ENCODE measurements at regions of chr3 and their contacts with region 1.

Region 1: DNA sequence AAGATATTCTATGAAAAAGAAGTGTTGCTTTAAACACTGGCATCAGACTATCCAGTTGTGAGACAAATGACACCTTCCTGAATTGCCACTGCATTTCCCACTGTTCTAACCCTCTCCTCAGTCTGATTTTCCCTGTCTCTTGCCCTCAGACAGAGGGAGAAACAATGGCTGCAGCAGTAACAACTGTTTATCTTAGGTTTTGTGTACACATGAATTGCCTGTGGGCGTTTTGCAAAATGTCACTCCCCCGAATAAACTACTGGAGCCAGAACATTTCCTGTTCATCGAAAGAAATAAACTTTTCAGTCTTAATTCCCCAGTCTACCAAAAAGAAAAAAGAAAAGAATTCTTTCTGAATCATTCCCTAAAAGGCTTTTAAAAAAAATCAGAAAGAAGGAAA is 155.1 kb downstream of the MAGI1 start:
- DNase-seq: no peak
- H3K4me3 Mint-ChIP-seq: peak overlapping the region; percentile 55
- H3K27ac Mint-ChIP-seq: peak overlapping the region; percentile 62
- H3K4me1 Mint-ChIP-seq: peaks cover 23% of the 10 kb centered on the region
- H3K27me3 Mint-ChIP-seq: no peaks in the 10 kb centered on the region
- CTCF ChIP-seq: no peak

Region 2: DNA sequence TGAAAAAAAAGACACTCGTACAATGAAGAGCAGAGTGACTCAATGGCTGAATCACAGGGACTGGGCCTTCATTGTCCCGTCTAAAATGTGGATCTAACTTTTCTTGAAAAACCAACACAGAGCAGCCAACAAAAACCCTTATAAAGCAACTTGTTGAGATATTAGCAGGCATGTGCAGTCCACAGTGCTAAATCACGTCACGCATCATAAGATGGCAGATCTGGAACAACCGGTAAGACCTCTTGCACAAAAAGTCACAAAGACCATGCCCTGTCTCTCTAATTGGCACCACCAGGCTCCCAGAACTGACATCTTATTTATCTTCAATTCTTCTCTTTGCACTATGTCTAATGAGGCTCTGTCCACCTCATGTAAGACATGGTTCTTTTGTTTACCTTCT is 21.9 kb before region 1 on chr3:
- CTCF ChIA-PET with region 1: no interaction called
- intact Hi-C with region 1: loop called (anchors 2 kb)
- DNase-seq: no peak
- H3K4me3 Mint-ChIP-seq: no peak overlapping the region
- H3K27ac Mint-ChIP-seq: no peak overlapping the region
- H3K4me1 Mint-ChIP-seq: peaks cover 32% of the 10 kb centered on the region
- H3K27me3 Mint-ChIP-seq: no peaks in the 10 kb centered on the region
- CTCF ChIP-seq: no peak

Region 3: DNA sequence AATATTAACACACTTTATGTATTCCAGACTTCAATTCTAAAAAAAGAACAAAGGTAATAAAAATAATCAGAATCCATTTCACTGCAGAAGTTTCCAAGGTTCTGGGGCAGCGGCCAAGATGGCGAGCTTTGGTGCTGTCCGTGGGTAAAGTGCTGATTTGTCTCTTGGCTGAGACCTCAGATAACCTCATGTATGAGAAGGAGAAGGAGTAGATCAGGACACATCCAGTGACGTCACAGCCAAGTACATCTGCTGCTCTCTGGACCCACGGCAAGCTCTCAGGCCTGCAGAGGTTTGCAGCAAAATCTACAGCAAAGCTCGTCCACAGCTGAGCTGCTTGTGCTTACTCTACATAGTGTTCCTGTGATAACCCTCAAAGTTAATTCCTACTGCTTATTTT is 10.6 kb before region 1 on chr3:
- CTCF ChIA-PET with region 1: no interaction called
- intact Hi-C with region 1: no loop called
- DNase-seq: no peak
- H3K4me3 Mint-ChIP-seq: no peak overlapping the region
- H3K27ac Mint-ChIP-seq: no peak overlapping the region
- H3K4me1 Mint-ChIP-seq: peaks cover 50% of the 10 kb centered on the region
- H3K27me3 Mint-ChIP-seq: no peaks in the 10 kb centered on the region
- CTCF ChIP-seq: no peak

Region 4: GRCh38 chr3:65936908-65937638 is 53.5 kb after region 1 on chr3:
- CTCF ChIA-PET with region 1: no interaction called
- intact Hi-C with region 1: no loop called
- DNase-seq: no peak
- H3K4me3 Mint-ChIP-seq: no peak overlapping the region
- H3K27ac Mint-ChIP-seq: peak overlapping the region; percentile 91
- H3K4me1 Mint-ChIP-seq: peaks cover 41% of the 10 kb centered on the region
- H3K27me3 Mint-ChIP-seq: no peaks in the 10 kb centered on the region
- CTCF ChIP-seq: no peak

Measured in Calu3 (cell line).